ENCODE measurements at regions of chr19 and their contacts with region 1.

Region 1: DNA sequence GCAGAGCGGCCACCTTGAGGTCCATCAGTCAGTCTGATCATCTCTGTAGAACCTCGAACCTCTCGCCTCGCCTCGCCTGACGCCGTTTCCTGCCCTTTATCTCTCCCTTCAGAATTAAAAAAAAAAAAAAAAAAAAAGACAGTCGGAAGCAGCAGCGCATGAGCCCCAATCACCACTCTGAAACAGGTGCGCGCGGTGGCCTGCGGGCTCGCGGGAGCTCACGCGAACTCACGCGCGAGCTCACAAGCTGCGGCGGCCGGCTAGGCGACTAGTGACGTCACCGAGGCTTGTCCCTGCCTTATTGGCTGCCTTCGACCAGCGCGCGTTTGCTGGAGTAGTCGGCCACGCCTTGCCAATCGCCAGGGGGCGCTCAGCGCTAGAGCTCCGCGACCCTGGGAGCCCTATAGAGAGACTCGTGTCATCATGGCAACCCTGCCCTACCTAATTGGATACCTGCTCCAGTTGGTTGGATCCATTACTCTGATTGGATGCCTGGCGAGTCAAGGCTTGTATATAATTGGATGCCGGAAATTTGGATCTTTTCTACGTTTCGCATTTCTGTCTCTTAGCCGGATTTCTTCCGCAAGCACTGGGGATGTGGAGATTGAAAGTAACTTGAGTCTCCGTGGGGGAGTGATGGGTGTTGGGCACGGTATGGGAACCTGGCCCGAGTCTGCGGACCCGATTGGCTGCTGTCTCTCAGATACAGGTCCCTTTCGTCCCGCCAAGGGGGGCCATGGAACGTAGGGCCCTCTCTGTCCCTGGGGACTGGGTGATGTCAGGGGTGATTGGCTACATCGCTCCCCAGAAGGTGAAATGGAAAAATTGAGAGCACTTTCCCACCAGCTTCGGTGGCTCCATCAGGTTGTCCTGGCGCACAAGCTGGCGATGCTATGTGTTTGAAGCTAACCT is 31.6 kb downstream of the SYT3 start:
- DNase-seq: peak; percentile 87

Region 2: DNA sequence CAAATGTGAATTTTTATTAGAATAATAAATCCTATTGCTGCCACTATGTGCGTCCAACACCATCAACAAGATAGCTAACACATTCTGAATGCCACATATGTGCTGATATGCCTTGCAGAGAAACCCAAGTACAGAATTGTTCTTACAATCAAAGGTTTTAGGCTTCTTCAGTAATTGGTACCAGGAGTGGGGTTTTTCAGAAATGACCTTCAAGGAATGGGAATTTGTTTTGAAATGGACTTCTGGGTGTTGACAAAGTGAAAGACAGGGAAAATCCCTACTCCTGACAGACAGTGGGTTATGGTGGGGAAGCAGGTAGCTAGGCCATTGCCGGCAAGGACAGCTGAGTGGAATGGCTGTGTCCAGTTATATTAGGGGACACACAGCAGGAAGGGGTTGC is 25.8 kb after region 1 on chr19:
- intact Hi-C with region 1: loop called in 1 of 2 experiments (anchors 1 kb)
- DNase-seq: no peak

Region 3: DNA sequence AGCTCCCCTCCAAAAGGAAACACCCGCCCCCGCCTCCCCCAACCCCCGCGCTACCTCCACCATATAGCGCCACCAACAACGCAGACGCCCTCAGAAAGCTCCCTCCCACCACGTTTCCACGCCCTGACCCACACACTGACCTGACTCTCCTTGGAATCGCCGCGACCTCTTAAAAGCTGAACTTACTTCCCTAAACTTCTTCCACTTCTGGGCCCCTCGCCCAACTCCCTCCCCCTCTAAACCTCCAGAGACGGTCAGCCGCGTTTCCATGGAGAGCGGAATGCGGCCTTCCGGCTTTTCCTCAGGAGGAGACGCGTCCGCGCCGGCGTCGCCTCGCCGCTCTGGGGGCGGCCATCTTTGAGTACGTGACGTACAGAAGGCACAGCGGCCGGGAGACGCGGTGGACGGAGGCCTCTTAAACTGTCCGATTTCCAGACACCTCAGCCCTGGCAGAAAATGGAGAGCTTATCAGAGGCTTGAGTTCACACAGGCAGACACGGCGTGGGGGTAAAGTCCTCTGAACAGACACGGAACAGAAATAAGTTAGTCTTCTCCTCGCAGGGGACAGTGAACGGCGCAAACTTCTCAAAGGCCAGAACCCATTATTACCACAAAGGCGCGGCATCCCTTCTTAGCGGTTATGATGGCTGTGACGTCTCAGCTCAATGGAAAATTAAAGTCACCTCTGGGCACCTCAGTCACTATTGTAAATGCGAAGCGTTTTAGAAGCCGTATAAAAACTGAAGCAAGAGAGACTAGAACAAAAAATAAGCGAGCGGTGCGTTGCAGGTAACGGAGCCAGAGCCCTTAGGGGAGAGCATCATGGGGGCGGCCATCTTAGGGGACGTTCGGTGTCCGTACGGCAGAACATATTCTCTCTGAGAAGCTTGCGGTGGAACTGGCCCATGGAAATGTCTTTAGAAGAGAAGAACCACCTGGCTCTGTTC is 1440.7 kb after region 1 on chr19 and contains the start of gene ZNF432:
- intact Hi-C with region 1: no loop called
- DNase-seq: peak; percentile 99
- total RNA-seq, gene ZNF432: 12.5 to 18.1 TPM

Measured in posterior vena cava (tissue), 2 donors.